Natural killer cell (primary cell): ENCODE measurements at regions of chr2 and their contacts with region 1.

Region 1: DNA sequence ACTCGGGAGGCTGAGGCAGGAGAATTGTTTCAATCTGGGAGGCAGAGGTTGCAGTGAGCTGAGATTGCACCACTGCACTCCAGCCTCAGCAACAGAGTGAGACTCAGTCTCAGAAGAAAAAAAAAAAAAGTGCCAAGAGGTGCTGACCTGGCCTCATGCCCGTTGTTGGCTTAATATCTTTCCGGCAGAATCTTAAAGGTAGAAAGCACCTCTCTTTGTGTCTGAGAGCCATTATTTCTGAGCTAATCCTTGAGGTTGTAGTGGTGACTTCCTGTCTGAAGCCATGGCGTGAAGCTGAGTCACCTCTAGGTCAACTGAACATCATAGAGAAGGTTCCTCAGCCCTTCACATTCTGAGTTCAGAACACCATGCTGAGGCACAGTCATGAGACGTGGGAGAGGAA is 60.4 kb downstream of the WDSUB1 start:
- DNase-seq: peak; percentile 47 to 58
- ATAC-seq: peak; percentile 84 to 87 (median 84)
- H3K4me3 ChIP-seq: no peak overlapping the region
- H3K4me3 Mint-ChIP-seq: peak overlapping the region; percentile 78
- H3K27ac ChIP-seq: peak overlapping the region; percentile 1
- H3K27ac Mint-ChIP-seq: peak overlapping the region; percentile 76 to 81
- H3K4me1 ChIP-seq: peaks cover 62% of the 10 kb centered on the region
- H3K4me1 Mint-ChIP-seq: peaks cover 66% of the 10 kb centered on the region in 2 donors
- H3K27me3 ChIP-seq: no peaks in the 10 kb centered on the region
- H3K27me3 Mint-ChIP-seq: no peaks in the 10 kb centered on the region
- CTCF ChIP-seq: no peak

Region 2: GRCh38 chr2:159201360-159202063 is 24.5 kb before region 1 on chr2:
- intact Hi-C with region 1: loop called (anchors 1 kb)
- DNase-seq: peak; percentile 45 to 68
- ATAC-seq: peak; percentile 69 to 79 (median 78)
- H3K4me3 ChIP-seq: no peak overlapping the region
- H3K4me3 Mint-ChIP-seq: peak overlapping the region; percentile 53
- H3K27ac ChIP-seq: peak overlapping the region; percentile 59
- H3K27ac Mint-ChIP-seq: peak overlapping the region; percentile 41 to 91
- H3K4me1 ChIP-seq: peaks cover 51% of the 10 kb centered on the region
- H3K4me1 Mint-ChIP-seq: peaks cover 51 to 55% of the 10 kb centered on the region in 2 donors
- H3K27me3 ChIP-seq: no peaks in the 10 kb centered on the region
- H3K27me3 Mint-ChIP-seq: no peaks in the 10 kb centered on the region
- CTCF ChIP-seq: no peak

Region 3: GRCh38 chr2:159286709-159287441 is 60.8 kb after region 1 on chr2:
- intact Hi-C with region 1: loop called (anchors 2 kb)
- DNase-seq: peak; percentile 92 to 99
- ATAC-seq: peak; percentile 96 to 100 (median 97)
- H3K4me3 ChIP-seq: peak overlapping the region; percentile 64
- H3K4me3 Mint-ChIP-seq: peak overlapping the region; percentile 87
- H3K27ac ChIP-seq: peak overlapping the region; percentile 73
- H3K27ac Mint-ChIP-seq: peak overlapping the region; percentile 73 to 91
- H3K4me1 ChIP-seq: peaks cover 29% of the 10 kb centered on the region
- H3K4me1 Mint-ChIP-seq: peaks cover 32 to 38% of the 10 kb centered on the region in 2 donors
- H3K27me3 ChIP-seq: no peaks in the 10 kb centered on the region
- H3K27me3 Mint-ChIP-seq: no peaks in the 10 kb centered on the region
- CTCF ChIP-seq: no peak